ENCODE measurements at regions of chr5 and their contacts with region 1.

Region 1: GRCh38 chr5:172659909-172660628 is 19.0 kb downstream of the NEURL1B start:
- DNase-seq: peak; percentile 94
- ATAC-seq: peak; percentile 85

Region 2: GRCh38 chr5:172690258-172691075 is 30.4 kb after region 1 on chr5:
- intact Hi-C with region 1: loop called (anchors 5 kb)
- DNase-seq: peak; percentile 51
- ATAC-seq: no peak

Measured in Right ventricle myocardium superior (tissue), 1 donor.